GM12878 (cell line): ENCODE measurements at regions of chr20 and their contacts with region 1.

Region 1: GRCh38 chr20:50070991-50071888 is 41.7 kb downstream of the UBE2V1 start:
- DNase-seq: no peak
- ATAC-seq: peak; percentile 99
- H3K4me3 ChIP-seq: peak overlapping the region; percentile 37; the same call in 1 of the 2 replicates
- H3K27ac ChIP-seq: no peak overlapping the region
- H3K4me1 ChIP-seq: peaks cover 5% of the 10 kb centered on the region
- H3K27me3 ChIP-seq: no peaks in the 10 kb centered on the region
- CTCF ChIP-seq: peak; percentile 99; a peak in 5 of 6 replicates
- EP300 ChIP-seq: no peak
- POLR2A ChIP-seq: no peak
- RAD21 ChIP-seq: peak; percentile 99

Region 2: GRCh38 chr20:49964964-49965780 is 106.1 kb before region 1 on chr20:
- CTCF ChIA-PET with region 1: interaction called, 31 read pairs
- POLR2A ChIA-PET with region 1: no interaction called
- RAD21 ChIA-PET with region 1: interaction called, 4 read pairs
- SMC1A ChIA-PET with region 1: interaction called, 6 read pairs
- in situ Hi-C with region 1: no loop called
- intact Hi-C with region 1: no loop called
- DNase-seq: no peak
- ATAC-seq: peak; percentile 83
- H3K4me3 ChIP-seq: no peak overlapping the region
- H3K27ac ChIP-seq: no peak overlapping the region
- H3K4me1 ChIP-seq: no peaks in the 10 kb centered on the region
- H3K27me3 ChIP-seq: no peaks in the 10 kb centered on the region
- CTCF ChIP-seq: peak; percentile 46 to 72 (median 68)
- EP300 ChIP-seq: no peak
- POLR2A ChIP-seq: no peak
- RAD21 ChIP-seq: no peak; the same call in 1 of the 2 replicates

Region 3: DNA sequence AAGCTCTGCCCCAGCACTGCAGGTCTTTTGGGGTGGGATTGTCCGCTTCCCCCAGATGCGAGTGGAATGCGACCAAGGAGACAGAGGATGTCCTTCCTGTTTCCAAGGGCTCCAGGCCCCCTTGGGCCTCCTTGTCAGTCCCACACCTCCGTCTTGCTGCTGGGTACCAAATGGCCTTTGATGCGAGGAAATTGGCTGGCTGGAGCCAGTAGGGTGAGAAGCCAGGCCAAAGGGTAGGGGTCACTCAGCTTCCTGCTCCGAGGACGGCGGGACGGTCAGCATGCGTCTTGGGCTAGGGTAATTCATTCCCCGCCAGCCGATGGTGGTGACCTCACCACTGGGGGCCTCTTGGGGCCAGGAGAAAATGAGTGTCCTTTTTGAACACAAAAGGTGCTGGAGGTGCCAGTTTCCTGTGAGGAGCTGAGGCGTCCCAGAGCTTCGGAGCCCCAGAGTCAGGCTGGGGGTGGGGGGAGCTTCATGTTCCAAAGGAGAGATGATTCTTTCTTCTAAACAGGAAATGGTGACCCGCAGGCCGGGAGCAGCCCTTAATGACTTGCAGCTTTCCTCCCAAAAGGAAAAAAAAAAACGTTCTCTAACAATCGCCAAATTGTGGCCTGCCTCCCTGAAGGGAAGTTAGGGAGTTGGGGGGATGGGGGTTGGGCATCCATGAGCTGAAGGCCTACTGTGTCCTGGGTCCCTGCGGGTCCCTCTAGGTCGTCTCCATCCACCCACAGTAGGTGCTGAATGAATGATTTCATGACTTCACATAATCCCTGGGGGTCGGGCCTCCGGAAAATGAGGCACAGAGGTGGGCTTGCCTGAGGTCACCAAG is 81.8 kb before region 1 on chr20:
- CTCF ChIA-PET with region 1: interaction called, 369 read pairs
- POLR2A ChIA-PET with region 1: no interaction called
- RAD21 ChIA-PET with region 1: interaction called, 234 read pairs
- SMC1A ChIA-PET with region 1: interaction called, 14 read pairs
- in situ Hi-C with region 1: loop called (anchors 5 kb)
- intact Hi-C with region 1: no loop called
- DNase-seq: no peak
- ATAC-seq: no peak
- H3K4me3 ChIP-seq: no peak overlapping the region
- H3K27ac ChIP-seq: no peak overlapping the region
- H3K4me1 ChIP-seq: peaks cover 2% of the 10 kb centered on the region; the same call in 1 of the 2 replicates
- H3K27me3 ChIP-seq: no peaks in the 10 kb centered on the region
- CTCF ChIP-seq: no peak
- EP300 ChIP-seq: no peak
- POLR2A ChIP-seq: no peak
- RAD21 ChIP-seq: no peak

Region 4: DNA sequence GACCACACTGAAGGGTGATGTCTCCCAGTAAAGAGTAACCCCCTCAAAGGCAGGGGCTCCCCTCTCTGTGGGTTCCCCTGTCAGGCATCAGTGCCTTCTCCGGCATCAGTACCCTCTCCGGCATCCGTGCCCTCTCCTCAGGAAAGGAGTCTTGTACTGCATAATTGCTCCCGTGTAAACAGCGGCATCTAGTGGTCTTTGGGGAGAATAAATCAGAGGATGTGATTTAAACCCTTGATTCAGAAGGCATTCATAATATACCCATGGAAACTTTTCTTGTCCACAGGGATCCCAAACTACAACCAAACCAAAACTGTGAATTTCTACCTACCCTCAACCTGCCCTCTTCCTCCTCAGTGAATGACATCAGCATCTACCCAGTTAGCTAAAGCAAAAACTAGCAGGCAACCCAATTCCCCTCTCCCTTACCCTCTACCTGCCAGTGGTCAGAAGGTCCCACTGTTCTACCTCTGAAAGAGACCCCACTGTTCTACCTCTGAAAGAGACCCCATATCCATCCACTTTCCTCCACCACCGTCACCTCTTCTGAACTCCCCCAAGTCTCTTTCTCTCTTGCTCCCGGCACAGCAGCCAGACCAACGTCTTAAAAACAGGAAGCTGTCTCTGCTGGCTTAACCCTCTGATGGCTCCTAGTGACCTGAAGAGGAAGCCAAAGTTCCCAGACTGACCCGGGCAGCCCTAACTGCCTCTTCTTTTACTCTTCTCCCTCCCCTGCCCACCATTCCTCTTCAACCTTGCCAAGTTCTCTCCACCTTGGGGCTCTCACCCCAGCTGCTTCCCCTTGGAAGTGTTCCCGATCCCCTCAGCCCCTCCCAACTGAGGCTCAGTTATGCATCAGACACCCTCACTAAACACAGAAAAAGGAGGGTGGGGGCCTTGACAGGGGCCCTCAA is 14.5 kb after region 1 on chr20:
- CTCF ChIA-PET with region 1: interaction called, 36 read pairs
- POLR2A ChIA-PET with region 1: no interaction called
- RAD21 ChIA-PET with region 1: interaction called, 22 read pairs
- SMC1A ChIA-PET with region 1: interaction called, 15 read pairs
- in situ Hi-C with region 1: no loop called
- intact Hi-C with region 1: no loop called
- DNase-seq: no peak
- ATAC-seq: peak; percentile 95
- H3K4me3 ChIP-seq: no peak overlapping the region
- H3K27ac ChIP-seq: peak overlapping the region; percentile 26; the same call in 1 of the 2 replicates
- H3K4me1 ChIP-seq: peaks cover 6% of the 10 kb centered on the region
- H3K27me3 ChIP-seq: no peaks in the 10 kb centered on the region
- CTCF ChIP-seq: peak; percentile 77 to 91 (median 82)
- EP300 ChIP-seq: no peak
- POLR2A ChIP-seq: 0 out of 2 replicates have a peak, but pooled peaks have one; percentile 11
- RAD21 ChIP-seq: peak; percentile 62

Region 5: DNA sequence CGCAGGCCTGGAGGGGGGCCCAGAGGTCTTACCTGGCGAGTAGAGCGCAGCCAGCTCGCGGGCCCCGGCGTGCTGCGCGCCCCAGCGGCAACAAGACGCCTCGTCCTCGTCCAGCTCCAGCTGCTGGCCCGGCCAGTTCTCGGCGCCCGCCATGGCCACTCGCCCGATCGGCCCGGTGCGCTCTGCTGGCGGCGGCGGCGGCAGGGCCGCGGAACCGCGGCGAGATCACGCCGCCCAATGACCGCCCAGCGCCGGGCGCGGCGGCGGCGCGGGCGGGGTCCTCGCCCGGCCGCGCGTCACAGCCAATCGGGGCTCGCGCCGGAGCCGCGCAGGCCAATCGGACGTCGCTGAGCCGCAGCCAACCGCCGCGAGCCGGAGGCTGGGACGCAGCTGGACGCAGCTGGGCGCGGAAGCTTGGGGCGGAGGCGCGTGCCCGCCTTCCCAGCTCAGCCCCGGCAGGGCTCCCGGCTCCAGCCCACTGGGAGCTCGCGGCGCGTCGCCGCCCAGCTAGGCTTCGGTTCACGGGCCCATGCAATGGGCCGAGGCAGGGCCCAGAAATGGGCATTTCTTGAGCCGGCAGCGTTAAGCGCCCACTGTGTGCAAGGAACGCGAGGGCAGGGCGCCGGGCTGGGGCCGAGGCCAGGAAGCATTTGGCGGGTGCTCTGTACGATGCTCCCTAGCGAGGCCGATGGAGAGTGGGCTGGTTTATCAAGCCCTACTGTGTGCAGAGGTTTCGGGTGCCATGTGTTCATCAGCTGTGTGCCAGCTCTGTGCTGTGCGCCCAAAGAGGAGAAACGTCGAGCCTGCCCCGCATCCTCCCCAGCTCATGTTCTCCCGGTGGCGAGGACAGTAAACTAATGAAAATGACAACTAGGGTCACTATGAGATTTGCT is 82.5 kb after region 1 on chr20 and contains the start of gene PEDS1:
- CTCF ChIA-PET with region 1: interaction called, 28 read pairs
- POLR2A ChIA-PET with region 1: interaction called, 3 read pairs
- RAD21 ChIA-PET with region 1: no interaction called
- SMC1A ChIA-PET with region 1: interaction called, 3 read pairs
- in situ Hi-C with region 1: no loop called
- intact Hi-C with region 1: no loop called
- DNase-seq: peak; percentile 45
- ATAC-seq: peak; percentile 98
- H3K4me3 ChIP-seq: peak within 1 kb of the TSS; percentile 98
- H3K27ac ChIP-seq: peak within 1 kb of the TSS; percentile 75
- H3K4me1 ChIP-seq: peaks cover 8% of the 10 kb centered on the region
- H3K27me3 ChIP-seq: no peaks in the 10 kb centered on the region
- CTCF ChIP-seq: no peak
- EP300 ChIP-seq: 0 out of 4 replicates have a peak, but pooled peaks of 1 of the 2 experiments have one; percentile 17
- POLR2A ChIP-seq: peak; percentile 94
- RAD21 ChIP-seq: no peak
- polyA plus RNA-seq, gene PEDS1: 1.7 to 4.3 TPM